ENCODE measurements at regions of chr6 and their contacts with region 1.

Region 1: DNA sequence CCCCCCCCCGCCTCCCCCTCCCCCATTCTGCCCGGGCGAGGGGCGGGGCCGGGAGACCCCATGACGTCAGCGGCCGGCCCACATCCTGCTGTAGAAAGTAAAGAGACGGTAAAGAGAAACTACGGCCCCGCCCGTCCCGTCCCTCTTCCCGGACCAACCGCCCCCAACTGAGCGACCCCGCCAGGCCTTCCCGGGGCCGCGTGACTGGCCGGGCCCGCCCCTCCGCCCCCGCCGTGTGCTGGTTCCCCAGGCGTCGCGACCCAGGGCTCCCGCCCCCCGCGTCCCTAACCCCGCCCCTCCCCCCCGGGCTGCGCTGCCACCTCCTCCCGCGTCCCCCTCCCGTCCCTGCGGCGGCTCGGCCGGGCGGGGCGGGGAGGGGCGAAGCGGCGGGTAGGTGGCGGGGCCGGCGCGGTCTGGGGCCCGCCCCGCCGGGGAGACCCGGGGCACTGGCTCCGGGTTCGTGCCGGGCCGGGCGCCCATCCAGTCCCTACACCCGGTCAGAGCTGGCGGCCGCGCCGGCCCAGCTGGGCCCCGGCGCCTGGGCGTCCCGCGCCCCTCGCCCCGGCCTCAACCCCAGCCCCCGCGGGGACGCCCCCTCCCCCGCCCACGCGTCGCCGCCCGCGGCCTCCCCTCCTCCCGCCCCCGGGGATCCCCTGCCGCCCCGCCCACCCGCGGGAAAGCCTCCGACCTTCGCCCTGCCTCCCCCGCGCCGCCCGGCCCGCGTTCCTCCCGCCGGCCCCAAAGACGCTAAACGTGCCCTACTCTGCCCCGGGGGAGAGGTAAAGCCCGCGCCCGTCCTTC is 636 bp upstream of the HIVEP1 start:
- DNase-seq: peak; percentile 81
- ATAC-seq: peak; percentile 74
- H3K4me3 ChIP-seq: no peak overlapping the region
- H3K27ac ChIP-seq: peak overlapping the region; percentile 97; the same call in 1 of the 2 replicates
- H3K4me1 ChIP-seq: peaks cover 8% of the 10 kb centered on the region
- H3K27me3 ChIP-seq: no peaks in the 10 kb centered on the region
- CTCF ChIP-seq: no peak
- EP300 ChIP-seq: peak in 1 of 2 experiments; percentile 47; a peak in 1 of 4 replicates
- POLR2A ChIP-seq: peak; percentile 77
- RAD21 ChIP-seq: no peak

Region 2: GRCh38 chr6:11653028-11653583 is 358.4 kb before region 1 on chr6:
- CTCF ChIA-PET with region 1: interaction called, 10 read pairs
- POLR2A ChIA-PET with region 1: interaction called, 3 read pairs
- RAD21 ChIA-PET with region 1: interaction called, 5 read pairs
- SMC1A ChIA-PET with region 1: interaction called, 8 read pairs
- in situ Hi-C with region 1: no loop called
- intact Hi-C with region 1: loop called (anchors 2 kb)
- DNase-seq: no peak
- ATAC-seq: peak; percentile 80
- H3K4me3 ChIP-seq: no peak overlapping the region
- H3K27ac ChIP-seq: no peak overlapping the region
- H3K4me1 ChIP-seq: peaks cover 17% of the 10 kb centered on the region
- H3K27me3 ChIP-seq: no peaks in the 10 kb centered on the region
- CTCF ChIP-seq: no peak
- EP300 ChIP-seq: no peak
- POLR2A ChIP-seq: no peak
- RAD21 ChIP-seq: no peak

Region 3: GRCh38 chr6:11722805-11723631 is 288.5 kb before region 1 on chr6:
- CTCF ChIA-PET with region 1: interaction called, 3 read pairs
- POLR2A ChIA-PET with region 1: interaction called, 3 read pairs
- RAD21 ChIA-PET with region 1: interaction called, 17 read pairs
- SMC1A ChIA-PET with region 1: interaction called, 12 read pairs
- in situ Hi-C with region 1: loop called (anchors 25 kb)
- intact Hi-C with region 1: no loop called
- DNase-seq: no peak
- ATAC-seq: peak; percentile 78
- H3K4me3 ChIP-seq: peak overlapping the region; percentile 63
- H3K27ac ChIP-seq: peak overlapping the region; percentile 88
- H3K4me1 ChIP-seq: peaks cover 8% of the 10 kb centered on the region
- H3K27me3 ChIP-seq: no peaks in the 10 kb centered on the region
- CTCF ChIP-seq: no peak
- EP300 ChIP-seq: no peak
- POLR2A ChIP-seq: no peak; the same call in 1 of the 2 replicates
- RAD21 ChIP-seq: 0 out of 2 replicates have a peak, but pooled peaks have one; percentile 4

Region 4: GRCh38 chr6:11824986-11825385 is 186.5 kb before region 1 on chr6:
- CTCF ChIA-PET with region 1: interaction called, 3 read pairs
- POLR2A ChIA-PET with region 1: interaction called, 5 read pairs
- RAD21 ChIA-PET with region 1: interaction called, 11 read pairs
- SMC1A ChIA-PET with region 1: interaction called, 12 read pairs
- in situ Hi-C with region 1: loop called (anchors 5 kb)
- intact Hi-C with region 1: loop called (anchors 1 kb)
- DNase-seq: peak; percentile 91
- ATAC-seq: peak; percentile 86
- H3K4me3 ChIP-seq: no peak overlapping the region
- H3K27ac ChIP-seq: peak overlapping the region; percentile 70
- H3K4me1 ChIP-seq: peaks cover 47% of the 10 kb centered on the region
- H3K27me3 ChIP-seq: no peaks in the 10 kb centered on the region
- CTCF ChIP-seq: no peak
- EP300 ChIP-seq: peak; percentile 90; a peak in 3 of 4 replicates
- POLR2A ChIP-seq: no peak
- RAD21 ChIP-seq: peak; percentile 14

Region 5: GRCh38 chr6:11868392-11868791 is 143.1 kb before region 1 on chr6:
- CTCF ChIA-PET with region 1: no interaction called
- POLR2A ChIA-PET with region 1: no interaction called
- RAD21 ChIA-PET with region 1: no interaction called
- SMC1A ChIA-PET with region 1: no interaction called
- in situ Hi-C with region 1: no loop called
- intact Hi-C with region 1: no loop called
- DNase-seq: no peak
- ATAC-seq: no peak
- H3K4me3 ChIP-seq: no peak overlapping the region
- H3K27ac ChIP-seq: no peak overlapping the region
- H3K4me1 ChIP-seq: no peaks in the 10 kb centered on the region
- H3K27me3 ChIP-seq: no peaks in the 10 kb centered on the region
- CTCF ChIP-seq: no peak
- EP300 ChIP-seq: no peak
- POLR2A ChIP-seq: no peak
- RAD21 ChIP-seq: no peak

Region 6: DNA sequence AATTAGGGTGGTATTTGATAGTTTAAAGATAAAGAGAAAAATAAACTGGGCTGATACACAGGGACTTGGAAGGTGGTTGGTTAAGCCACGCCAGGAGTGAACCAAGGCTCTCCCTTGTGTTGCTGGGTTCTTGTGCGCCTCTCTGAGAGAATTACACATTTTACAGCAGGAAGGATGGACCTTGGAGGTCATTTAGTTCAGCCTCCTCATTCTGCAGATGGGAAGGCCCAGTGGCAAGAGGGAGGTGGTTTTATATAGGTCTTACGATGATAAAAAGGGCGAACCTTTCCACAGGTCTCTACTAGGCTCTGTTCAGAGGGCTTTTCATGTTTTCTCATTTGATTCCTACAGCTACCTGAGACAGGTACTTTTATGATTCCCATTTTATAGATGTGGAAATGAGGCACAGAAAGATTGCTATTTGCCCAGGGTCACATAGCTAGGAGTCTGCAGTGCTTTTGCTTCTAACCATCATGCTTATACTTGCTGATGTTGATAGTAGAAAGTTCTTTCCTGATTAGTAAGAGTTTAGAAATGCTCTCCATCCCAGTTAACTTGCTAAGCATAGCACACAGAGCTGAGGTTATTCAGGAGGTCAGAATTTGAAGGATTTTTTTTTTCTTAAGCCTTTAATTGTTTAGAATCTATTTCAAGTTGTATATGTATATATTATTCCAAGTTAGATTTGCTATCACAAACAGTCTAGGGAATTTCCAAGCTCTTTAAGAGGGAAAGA is 13.4 kb after region 1 on chr6:
- CTCF ChIA-PET with region 1: interaction called, 3 read pairs
- POLR2A ChIA-PET with region 1: interaction called, 3 read pairs
- RAD21 ChIA-PET with region 1: interaction called, 15 read pairs
- SMC1A ChIA-PET with region 1: interaction called, 22 read pairs
- in situ Hi-C with region 1: no loop called
- intact Hi-C with region 1: no loop called
- DNase-seq: no peak
- ATAC-seq: peak; percentile 8; the same call in 2 of the 3 replicates
- H3K4me3 ChIP-seq: no peak overlapping the region
- H3K27ac ChIP-seq: no peak overlapping the region
- H3K4me1 ChIP-seq: peaks cover 4% of the 10 kb centered on the region; the same call in 1 of the 2 replicates
- H3K27me3 ChIP-seq: no peaks in the 10 kb centered on the region
- CTCF ChIP-seq: no peak
- EP300 ChIP-seq: no peak
- POLR2A ChIP-seq: no peak
- RAD21 ChIP-seq: no peak

Region 7: DNA sequence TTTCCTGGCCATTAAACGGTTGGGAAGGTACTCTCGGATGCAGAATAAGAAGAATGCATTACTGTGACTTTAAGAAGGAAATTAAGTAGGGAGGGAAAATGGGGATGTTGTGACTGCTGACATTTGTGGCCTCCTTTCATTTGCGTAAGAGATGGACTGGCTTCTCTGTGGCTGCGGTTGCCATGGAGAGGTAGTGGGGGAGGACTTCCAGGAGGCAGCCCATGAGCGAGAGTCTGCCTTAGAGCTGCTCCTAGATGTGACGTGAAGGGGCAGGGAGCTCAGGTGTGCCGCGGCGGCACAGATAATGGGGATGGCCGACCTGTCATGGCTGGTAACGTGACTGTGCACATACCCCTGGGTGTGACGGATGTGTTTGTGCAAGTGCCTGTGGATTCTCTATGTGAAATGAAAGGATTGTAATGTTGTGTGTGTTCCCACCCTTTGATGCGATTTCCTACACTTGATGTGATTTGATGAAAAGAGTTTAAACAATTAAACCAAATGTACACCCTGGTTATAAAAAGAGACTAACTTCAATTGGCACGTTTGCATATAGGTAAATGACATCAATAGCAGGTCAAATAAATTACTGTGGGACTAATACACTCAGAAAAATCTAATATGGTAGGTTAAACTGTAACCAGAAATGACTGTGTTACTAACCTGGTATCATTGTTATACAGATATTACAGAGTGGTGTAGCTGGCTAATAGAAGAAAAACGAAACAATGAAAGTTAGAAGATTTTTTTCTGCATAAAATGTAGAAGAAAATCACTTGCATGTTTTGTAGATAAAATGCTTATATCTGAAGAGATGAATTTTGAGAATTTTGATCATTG is 49.5 kb after region 1 on chr6:
- CTCF ChIA-PET with region 1: interaction called, 6 read pairs
- POLR2A ChIA-PET with region 1: interaction called, 9 read pairs
- RAD21 ChIA-PET with region 1: interaction called, 77 read pairs
- SMC1A ChIA-PET with region 1: interaction called, 23 read pairs
- in situ Hi-C with region 1: no loop called
- intact Hi-C with region 1: loop called (anchors 2 kb)
- DNase-seq: peak; percentile 87
- ATAC-seq: peak; percentile 82
- H3K4me3 ChIP-seq: peak overlapping the region; percentile 57; the same call in 1 of the 2 replicates
- H3K27ac ChIP-seq: peak overlapping the region; percentile 85
- H3K4me1 ChIP-seq: peaks cover 44% of the 10 kb centered on the region
- H3K27me3 ChIP-seq: no peaks in the 10 kb centered on the region
- CTCF ChIP-seq: no peak
- EP300 ChIP-seq: peak; percentile 94
- POLR2A ChIP-seq: peak; percentile 70
- RAD21 ChIP-seq: no peak

Region 8: DNA sequence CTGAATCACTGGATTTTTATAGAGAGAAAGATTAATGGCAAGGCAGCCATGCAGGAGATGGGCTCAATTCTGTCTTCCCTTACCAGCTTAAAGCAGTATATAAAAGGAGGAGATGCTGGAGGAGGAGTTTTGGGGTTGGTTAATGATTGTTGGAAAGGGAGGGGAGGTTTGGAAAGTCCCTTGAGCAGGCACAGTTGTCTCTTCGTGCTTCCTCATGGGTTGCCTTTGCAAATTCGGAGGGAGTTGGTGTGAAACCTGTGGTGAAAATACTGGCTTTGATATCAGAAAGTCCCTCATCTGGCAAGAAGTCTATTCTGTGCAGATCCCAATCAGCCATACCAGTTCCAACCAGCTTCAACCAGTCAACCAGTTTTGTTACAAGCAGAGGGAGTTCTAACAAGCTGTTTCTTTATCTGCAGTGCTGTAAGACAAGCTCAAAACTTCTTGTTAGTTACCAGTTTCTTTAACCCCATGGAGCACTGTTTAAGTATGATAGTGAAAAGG is 107.7 kb after region 1 on chr6:
- CTCF ChIA-PET with region 1: interaction called, 4 read pairs
- POLR2A ChIA-PET with region 1: interaction called, 4 read pairs
- RAD21 ChIA-PET with region 1: interaction called, 12 read pairs
- SMC1A ChIA-PET with region 1: interaction called, 20 read pairs
- in situ Hi-C with region 1: no loop called
- intact Hi-C with region 1: loop called (anchors 2 kb)
- DNase-seq: peak; percentile 97
- ATAC-seq: peak; percentile 83
- H3K4me3 ChIP-seq: peak overlapping the region; percentile 34; the same call in 1 of the 2 replicates
- H3K27ac ChIP-seq: peak overlapping the region; percentile 92
- H3K4me1 ChIP-seq: peaks cover 34% of the 10 kb centered on the region
- H3K27me3 ChIP-seq: no peaks in the 10 kb centered on the region
- CTCF ChIP-seq: no peak
- EP300 ChIP-seq: peak; percentile 82 to 90; a peak in 3 of 4 replicates
- POLR2A ChIP-seq: no peak
- RAD21 ChIP-seq: no peak

Measured in GM12878 (cell line).